ENCODE measurements at regions of chr22 and their contacts with region 1.

Region 1: GRCh38 chr22:25536589-25536988 is 27.9 kb upstream of the GRK3 start:
- DNase-seq: no peak
- ATAC-seq: peak; percentile 76 to 82

Region 2: GRCh38 chr22:25488244-25489020 is 48.2 kb before region 1 on chr22:
- intact Hi-C with region 1: loop called in 1 of 2 experiments (anchors 10 kb)
- DNase-seq: peak; percentile 79
- ATAC-seq: peak; percentile 79 to 86

Measured in left cardiac atrium (tissue), 4 donors.